MCF 10A (cell line): ENCODE measurements at regions of chr5 and their contacts with region 1.

Region 1: GRCh38 chr5:36414869-36415282 is 113.2 kb upstream of the RANBP3L start:
- DNase-seq: peak; percentile 68
- H3K4me3 Mint-ChIP-seq: no peak overlapping the region
- H3K27ac Mint-ChIP-seq: no peak overlapping the region
- H3K4me1 Mint-ChIP-seq: peaks cover 17% of the 10 kb centered on the region
- H3K27me3 Mint-ChIP-seq: no peaks in the 10 kb centered on the region
- CTCF ChIP-seq: peak; percentile 47

Region 2: GRCh38 chr5:36438765-36439561 is 24.1 kb after region 1 on chr5:
- CTCF ChIA-PET with region 1: interaction called, 49 read pairs
- POLR2A ChIA-PET with region 1: interaction called, 81 read pairs
- intact Hi-C with region 1: no loop called
- DNase-seq: no peak
- H3K4me3 Mint-ChIP-seq: no peak overlapping the region
- H3K27ac Mint-ChIP-seq: peak overlapping the region; percentile 57
- H3K4me1 Mint-ChIP-seq: peaks cover 20% of the 10 kb centered on the region
- H3K27me3 Mint-ChIP-seq: no peaks in the 10 kb centered on the region
- CTCF ChIP-seq: no peak

Region 3: DNA sequence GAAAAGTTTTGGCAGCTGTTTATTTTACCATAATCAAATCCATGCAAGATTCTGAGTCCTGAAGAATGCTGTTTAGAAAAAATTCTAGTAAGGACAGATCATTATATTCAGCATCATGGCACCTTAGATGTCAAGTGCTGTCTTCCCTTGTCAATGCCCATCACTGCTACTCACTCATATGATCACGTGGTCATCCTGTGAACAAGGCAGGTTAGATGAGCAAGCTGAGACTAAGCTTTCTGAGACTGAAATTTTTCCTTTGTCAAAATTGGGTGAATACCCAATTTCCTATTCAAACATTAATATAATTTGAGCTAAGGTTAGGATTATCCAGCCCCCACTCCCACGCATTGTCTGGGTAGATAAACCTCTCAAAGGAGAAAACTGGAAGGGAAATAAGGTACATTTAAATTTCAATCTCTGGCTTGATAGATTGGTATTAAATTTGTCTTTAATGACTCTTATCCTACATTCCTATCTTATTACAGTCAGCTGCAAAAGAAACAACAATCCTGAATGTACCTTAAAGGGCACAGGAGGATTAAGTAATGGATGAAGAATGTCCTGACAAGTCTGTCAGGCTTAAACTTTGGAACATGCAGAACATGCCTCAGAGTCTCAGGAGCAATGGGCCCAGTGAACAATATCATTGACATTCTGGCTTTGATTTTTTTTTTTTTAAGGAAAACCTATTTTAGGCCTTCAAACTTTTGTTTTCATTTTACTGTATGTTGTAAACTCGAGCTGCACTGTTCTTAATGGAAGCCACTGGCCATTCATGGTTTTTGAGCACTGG is 35.6 kb after region 1 on chr5:
- CTCF ChIA-PET with region 1: interaction called, 11 read pairs
- POLR2A ChIA-PET with region 1: interaction called, 81 read pairs
- intact Hi-C with region 1: no loop called
- DNase-seq: no peak
- H3K4me3 Mint-ChIP-seq: no peak overlapping the region
- H3K27ac Mint-ChIP-seq: peak overlapping the region; percentile 51
- H3K4me1 Mint-ChIP-seq: peaks cover 26% of the 10 kb centered on the region
- H3K27me3 Mint-ChIP-seq: no peaks in the 10 kb centered on the region
- CTCF ChIP-seq: no peak

Region 4: GRCh38 chr5:36494756-36495601 is 80.1 kb after region 1 on chr5:
- CTCF ChIA-PET with region 1: interaction called, 277 read pairs
- POLR2A ChIA-PET with region 1: interaction called, 6 read pairs
- intact Hi-C with region 1: no loop called
- DNase-seq: peak; percentile 42
- H3K4me3 Mint-ChIP-seq: no peak overlapping the region
- H3K27ac Mint-ChIP-seq: no peak overlapping the region
- H3K4me1 Mint-ChIP-seq: peaks cover 25% of the 10 kb centered on the region
- H3K27me3 Mint-ChIP-seq: no peaks in the 10 kb centered on the region
- CTCF ChIP-seq: no peak

Region 5: GRCh38 chr5:36606428-36607113 is 191.7 kb after region 1 on chr5 and contains the start of gene SLC1A3:
- CTCF ChIA-PET with region 1: interaction called, 8 read pairs
- POLR2A ChIA-PET with region 1: interaction called, 31 read pairs
- intact Hi-C with region 1: loop called (anchors 2 kb)
- DNase-seq: peak; percentile 84
- H3K4me3 Mint-ChIP-seq: peak within 1 kb of the TSS; percentile 88
- H3K27ac Mint-ChIP-seq: peak within 1 kb of the TSS; percentile 84
- H3K4me1 Mint-ChIP-seq: peaks cover 9% of the 10 kb centered on the region
- H3K27me3 Mint-ChIP-seq: no peaks in the 10 kb centered on the region
- CTCF ChIP-seq: no peak
- total RNA-seq, gene SLC1A3: 5.9 and 9.6 TPM in 2 replicates